ENCODE measurements at regions of chr5 and their contacts with region 1.

Region 1: GRCh38 chr5:142713121-142713706 is 27.3 kb upstream of the FGF1 start:
- DNase-seq: peak; percentile 54
- H3K4me3 ChIP-seq: peak overlapping the region; percentile 72
- H3K27ac ChIP-seq: no peak overlapping the region
- H3K27me3 ChIP-seq: peaks cover 2% of the 10 kb centered on the region
- CTCF ChIP-seq: peak; percentile 79

Region 2: GRCh38 chr5:142611154-142611553 is 102.1 kb before region 1 on chr5:
- CTCF ChIA-PET with region 1: interaction called, 31 read pairs
- POLR2A ChIA-PET with region 1: no interaction called
- DNase-seq: peak; percentile 30
- H3K4me3 ChIP-seq: no peak overlapping the region
- H3K27ac ChIP-seq: no peak overlapping the region
- H3K27me3 ChIP-seq: no peaks in the 10 kb centered on the region
- CTCF ChIP-seq: peak; percentile 92

Region 3: DNA sequence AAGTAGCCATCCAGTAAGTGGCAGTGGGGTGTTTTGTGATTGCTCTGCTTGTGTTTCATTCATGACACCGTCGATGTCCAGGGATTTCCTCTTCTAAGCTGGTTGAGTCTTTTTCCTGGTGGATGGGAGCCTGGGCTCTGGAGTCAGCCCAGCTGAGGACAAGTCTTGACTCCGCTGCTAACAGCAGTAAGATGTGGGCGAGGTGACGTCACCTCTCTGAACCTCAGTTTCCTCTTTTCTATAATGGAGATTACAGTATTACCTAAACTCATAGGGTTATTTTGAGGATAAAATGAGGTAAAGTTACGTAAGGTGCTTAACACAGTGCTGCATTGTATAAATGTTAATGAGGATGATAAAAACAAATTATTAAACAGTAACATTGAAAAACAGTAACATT is 48.6 kb before region 1 on chr5:
- CTCF ChIA-PET with region 1: interaction called, 14 read pairs
- POLR2A ChIA-PET with region 1: no interaction called
- DNase-seq: no peak
- H3K4me3 ChIP-seq: no peak overlapping the region
- H3K27ac ChIP-seq: no peak overlapping the region
- H3K27me3 ChIP-seq: no peaks in the 10 kb centered on the region
- CTCF ChIP-seq: no peak

Region 4: GRCh38 chr5:142726188-142726731 is 13.0 kb after region 1 on chr5:
- CTCF ChIA-PET with region 1: interaction called, 68 read pairs
- POLR2A ChIA-PET with region 1: no interaction called
- DNase-seq: peak; percentile 59
- H3K4me3 ChIP-seq: no peak overlapping the region
- H3K27ac ChIP-seq: peak overlapping the region; percentile 55
- H3K27me3 ChIP-seq: peaks cover 6% of the 10 kb centered on the region
- CTCF ChIP-seq: no peak

Region 5: GRCh38 chr5:142798099-142798770 is 85.0 kb after region 1 on chr5:
- CTCF ChIA-PET with region 1: interaction called, 18 read pairs
- POLR2A ChIA-PET with region 1: no interaction called
- DNase-seq: no peak
- H3K4me3 ChIP-seq: no peak overlapping the region
- H3K27ac ChIP-seq: peak overlapping the region; percentile 11
- H3K27me3 ChIP-seq: peaks cover 44% of the 10 kb centered on the region
- CTCF ChIP-seq: no peak

Region 6: DNA sequence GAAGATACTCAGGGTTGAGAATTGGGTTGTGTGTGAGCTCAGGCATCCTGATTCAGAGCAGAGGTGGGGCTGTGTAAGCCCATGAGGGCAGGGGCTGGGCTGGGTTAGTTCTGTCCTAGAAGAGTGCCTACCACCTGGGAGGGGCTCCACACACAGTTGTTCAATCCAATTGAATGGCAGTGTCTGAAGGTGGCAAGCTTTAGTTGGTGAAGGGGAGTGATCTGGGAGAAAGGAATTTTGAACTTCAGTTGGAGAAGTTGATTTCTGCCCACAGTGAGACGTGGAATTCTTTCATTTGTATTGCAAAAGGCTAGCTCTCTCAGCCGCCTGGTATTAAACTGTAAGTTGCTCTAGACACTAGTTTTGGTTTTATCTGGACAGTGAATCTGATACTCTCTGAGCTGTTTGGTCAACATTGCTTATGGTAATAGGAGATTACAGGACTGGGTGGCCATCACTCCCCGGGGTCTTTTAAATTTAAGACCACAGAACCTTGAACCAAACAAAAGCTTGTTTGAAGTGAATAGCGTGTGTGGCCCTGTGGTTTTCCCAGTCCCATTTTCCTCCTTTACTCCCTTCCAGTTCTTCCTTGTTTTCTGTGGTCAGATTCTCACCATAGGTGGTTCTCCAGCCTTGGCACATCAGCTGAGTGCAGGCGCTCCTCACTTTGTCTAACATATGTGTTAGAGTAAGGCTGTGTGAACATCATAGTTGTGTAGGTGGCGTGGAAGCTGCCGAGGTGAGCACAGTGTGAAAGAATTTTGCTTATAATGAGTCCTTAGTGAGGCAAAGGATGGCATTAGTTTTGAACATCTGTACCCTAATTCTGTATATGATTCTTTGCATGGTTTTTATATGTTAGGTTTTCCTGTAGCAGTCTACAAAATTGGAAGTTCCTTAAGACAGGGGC is 134.9 kb after region 1 on chr5:
- CTCF ChIA-PET with region 1: interaction called, 12 read pairs
- POLR2A ChIA-PET with region 1: no interaction called
- DNase-seq: no peak
- H3K4me3 ChIP-seq: no peak overlapping the region
- H3K27ac ChIP-seq: no peak overlapping the region
- H3K27me3 ChIP-seq: peaks cover 5% of the 10 kb centered on the region
- CTCF ChIP-seq: no peak

Region 7: DNA sequence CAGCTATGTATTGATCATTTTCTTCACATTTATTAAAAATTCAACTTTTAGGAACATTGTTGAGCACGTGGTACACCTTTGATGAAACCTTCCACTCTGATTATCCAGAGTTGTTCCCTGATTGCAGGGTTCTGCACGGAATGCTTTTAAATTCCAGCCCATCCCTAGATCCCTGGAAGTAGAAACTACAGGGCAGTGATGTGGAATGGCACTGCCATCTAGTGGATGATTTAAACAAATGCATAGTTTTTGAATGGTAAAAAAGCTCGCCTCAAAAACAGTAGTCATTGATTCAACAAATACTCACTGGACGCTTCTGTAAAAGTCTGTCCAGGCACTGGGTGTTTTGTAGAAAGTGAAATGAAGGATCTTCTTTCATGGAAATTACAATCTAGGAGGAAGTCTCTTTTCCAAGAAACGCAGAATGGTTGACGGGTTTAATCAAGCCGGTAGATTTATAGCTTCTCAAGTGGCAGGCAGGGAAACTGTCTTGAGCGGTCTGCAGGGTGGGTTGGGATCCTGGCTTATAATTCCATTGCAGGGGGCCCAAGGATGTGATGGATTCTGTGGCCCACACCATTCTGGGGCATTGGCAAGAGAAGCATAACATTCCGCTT is 175.4 kb after region 1 on chr5:
- CTCF ChIA-PET with region 1: interaction called, 1,004 read pairs
- POLR2A ChIA-PET with region 1: interaction called, 3 read pairs
- DNase-seq: no peak
- H3K4me3 ChIP-seq: no peak overlapping the region
- H3K27ac ChIP-seq: no peak overlapping the region
- H3K27me3 ChIP-seq: no peaks in the 10 kb centered on the region
- CTCF ChIP-seq: peak; percentile 75

Region 8: GRCh38 chr5:144405991-144406390 is 1692.8 kb after region 1 on chr5:
- CTCF ChIA-PET with region 1: no interaction called
- POLR2A ChIA-PET with region 1: no interaction called
- DNase-seq: no peak
- H3K4me3 ChIP-seq: no peak overlapping the region
- H3K27ac ChIP-seq: no peak overlapping the region
- H3K27me3 ChIP-seq: no peaks in the 10 kb centered on the region
- CTCF ChIP-seq: no peak

Measured in AG04450 (cell line).